ENCODE measurements at regions of chr17 and their contacts with region 1.

Region 1: GRCh38 chr17:52368886-52369285 is 210.4 kb upstream of the CA10 start:
- DNase-seq: no peak
- H3K4me3 ChIP-seq: no peak overlapping the region
- H3K27ac ChIP-seq: no peak overlapping the region
- H3K4me1 ChIP-seq: no peaks in the 10 kb centered on the region
- H3K27me3 ChIP-seq: no peaks in the 10 kb centered on the region
- CTCF ChIP-seq: no peak

Region 2: GRCh38 chr17:52306314-52306713 is 62.6 kb before region 1 on chr17:
- intact Hi-C with region 1: loop called (anchors 10 kb)
- DNase-seq: no peak
- H3K4me3 ChIP-seq: no peak overlapping the region
- H3K27ac ChIP-seq: no peak overlapping the region
- H3K4me1 ChIP-seq: no peaks in the 10 kb centered on the region
- H3K27me3 ChIP-seq: no peaks in the 10 kb centered on the region
- CTCF ChIP-seq: no peak

Measured in ascending aorta (tissue), 2 donors.